ENCODE measurements at regions of chr3 and their contacts with region 1.

Region 1: GRCh38 chr3:99114565-99115291 is 213.2 kb upstream of the DCBLD2 start:
- DNase-seq: peak; percentile 76
- H3K4me3 Mint-ChIP-seq: no peak overlapping the region
- H3K27ac Mint-ChIP-seq: no peak overlapping the region
- H3K4me1 Mint-ChIP-seq: no peaks in the 10 kb centered on the region
- H3K27me3 Mint-ChIP-seq: no peaks in the 10 kb centered on the region
- CTCF ChIP-seq: peak; percentile 82

Region 2: DNA sequence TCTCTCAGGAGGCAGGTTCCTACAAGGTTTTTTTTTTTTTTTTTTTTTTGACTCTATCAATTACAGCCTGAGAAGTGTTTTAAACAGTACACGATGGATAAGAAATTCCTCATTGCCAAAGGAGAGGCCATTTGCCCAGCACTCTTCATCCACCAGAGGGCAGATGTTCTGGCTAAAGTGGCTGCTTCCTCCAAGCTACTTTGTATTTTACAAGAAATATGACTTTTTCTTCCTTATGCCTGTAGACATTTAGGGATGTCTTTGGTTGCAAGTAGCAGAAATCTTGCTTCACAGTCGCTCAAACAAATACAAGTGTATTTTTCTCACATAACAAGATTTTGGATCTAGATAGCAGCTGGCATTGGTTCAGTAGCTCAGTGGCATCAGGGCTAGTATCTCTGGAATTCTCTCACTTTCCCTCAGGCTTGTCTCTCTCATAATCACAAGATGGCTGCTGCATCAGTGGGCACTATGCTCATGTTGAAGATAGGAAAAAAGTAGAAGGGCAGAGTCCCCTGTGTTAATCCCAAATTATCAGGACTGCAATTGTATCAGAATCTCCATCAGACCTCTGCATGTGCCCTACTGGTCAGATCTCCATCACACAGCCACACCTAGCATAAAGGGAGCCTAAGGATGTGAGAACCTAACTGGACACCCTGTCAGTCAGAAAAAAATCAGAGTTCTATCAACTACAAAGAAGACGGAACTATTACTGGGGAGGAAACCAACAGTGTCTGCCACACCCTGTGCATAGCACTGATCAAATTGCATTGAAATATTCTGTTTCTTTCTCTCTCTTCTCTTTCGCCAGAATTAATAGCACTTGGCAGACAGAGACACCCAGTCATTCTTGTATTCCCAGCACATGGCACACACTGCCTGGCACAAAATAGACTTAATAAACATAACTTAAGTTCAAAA is 384.8 kb after region 1 on chr3:
- CTCF ChIA-PET with region 1: interaction called, 6 read pairs
- POLR2A ChIA-PET with region 1: no interaction called
- intact Hi-C with region 1: loop called (anchors 10 kb)
- DNase-seq: peak; percentile 70
- H3K4me3 Mint-ChIP-seq: no peak overlapping the region
- H3K27ac Mint-ChIP-seq: no peak overlapping the region
- H3K4me1 Mint-ChIP-seq: peaks cover 28% of the 10 kb centered on the region
- H3K27me3 Mint-ChIP-seq: no peaks in the 10 kb centered on the region
- CTCF ChIP-seq: peak; percentile 61

Region 3: GRCh38 chr3:99686955-99687612 is 572.4 kb after region 1 on chr3:
- CTCF ChIA-PET with region 1: interaction called, 4 read pairs
- POLR2A ChIA-PET with region 1: no interaction called
- intact Hi-C with region 1: loop called (anchors 2 kb)
- DNase-seq: peak; percentile 76
- H3K4me3 Mint-ChIP-seq: no peak overlapping the region
- H3K27ac Mint-ChIP-seq: peak overlapping the region; percentile 71
- H3K4me1 Mint-ChIP-seq: peaks cover 15% of the 10 kb centered on the region
- H3K27me3 Mint-ChIP-seq: no peaks in the 10 kb centered on the region
- CTCF ChIP-seq: peak; percentile 69

Region 4: DNA sequence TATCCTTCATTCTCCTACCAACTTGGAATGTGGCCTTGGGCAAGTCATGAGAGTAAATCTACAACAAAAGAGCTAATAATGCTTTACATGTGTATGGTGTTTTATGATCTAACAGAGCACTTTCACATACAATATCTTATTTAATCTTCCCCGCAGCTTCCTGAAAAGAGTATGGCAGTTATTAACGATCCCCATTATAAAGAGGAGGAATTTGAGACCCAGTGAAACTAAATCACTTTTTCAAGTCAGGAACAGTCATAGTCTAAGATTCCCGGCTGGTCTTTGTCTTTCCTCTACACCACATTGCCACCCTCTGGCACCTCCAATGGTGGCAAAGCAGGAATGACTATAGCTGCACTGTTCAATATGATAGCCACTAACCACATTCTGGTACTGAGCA is 633.2 kb after region 1 on chr3:
- CTCF ChIA-PET with region 1: interaction called, 14 read pairs
- POLR2A ChIA-PET with region 1: no interaction called
- intact Hi-C with region 1: loop called (anchors 1 kb)
- DNase-seq: peak; percentile 49
- H3K4me3 Mint-ChIP-seq: no peak overlapping the region
- H3K27ac Mint-ChIP-seq: no peak overlapping the region
- H3K4me1 Mint-ChIP-seq: peaks cover 14% of the 10 kb centered on the region
- H3K27me3 Mint-ChIP-seq: no peaks in the 10 kb centered on the region
- CTCF ChIP-seq: peak; percentile 39

Region 5: GRCh38 chr3:99789011-99789721 is 674.4 kb after region 1 on chr3:
- CTCF ChIA-PET with region 1: interaction called, 3 read pairs
- POLR2A ChIA-PET with region 1: no interaction called
- intact Hi-C with region 1: loop called (anchors 1 kb)
- DNase-seq: peak; percentile 66
- H3K4me3 Mint-ChIP-seq: no peak overlapping the region
- H3K27ac Mint-ChIP-seq: no peak overlapping the region
- H3K4me1 Mint-ChIP-seq: peaks cover 6% of the 10 kb centered on the region
- H3K27me3 Mint-ChIP-seq: no peaks in the 10 kb centered on the region
- CTCF ChIP-seq: peak; percentile 63

Region 6: GRCh38 chr3:99808151-99808794 is 693.5 kb after region 1 on chr3:
- CTCF ChIA-PET with region 1: no interaction called
- POLR2A ChIA-PET with region 1: no interaction called
- intact Hi-C with region 1: loop called (anchors 5 kb)
- DNase-seq: peak; percentile 74
- H3K4me3 Mint-ChIP-seq: no peak overlapping the region
- H3K27ac Mint-ChIP-seq: no peak overlapping the region
- H3K4me1 Mint-ChIP-seq: no peaks in the 10 kb centered on the region
- H3K27me3 Mint-ChIP-seq: no peaks in the 10 kb centered on the region
- CTCF ChIP-seq: peak; percentile 69